WTC11 (cell line): ENCODE measurements at regions of chr22 and their contacts with region 1.

Region 1: DNA sequence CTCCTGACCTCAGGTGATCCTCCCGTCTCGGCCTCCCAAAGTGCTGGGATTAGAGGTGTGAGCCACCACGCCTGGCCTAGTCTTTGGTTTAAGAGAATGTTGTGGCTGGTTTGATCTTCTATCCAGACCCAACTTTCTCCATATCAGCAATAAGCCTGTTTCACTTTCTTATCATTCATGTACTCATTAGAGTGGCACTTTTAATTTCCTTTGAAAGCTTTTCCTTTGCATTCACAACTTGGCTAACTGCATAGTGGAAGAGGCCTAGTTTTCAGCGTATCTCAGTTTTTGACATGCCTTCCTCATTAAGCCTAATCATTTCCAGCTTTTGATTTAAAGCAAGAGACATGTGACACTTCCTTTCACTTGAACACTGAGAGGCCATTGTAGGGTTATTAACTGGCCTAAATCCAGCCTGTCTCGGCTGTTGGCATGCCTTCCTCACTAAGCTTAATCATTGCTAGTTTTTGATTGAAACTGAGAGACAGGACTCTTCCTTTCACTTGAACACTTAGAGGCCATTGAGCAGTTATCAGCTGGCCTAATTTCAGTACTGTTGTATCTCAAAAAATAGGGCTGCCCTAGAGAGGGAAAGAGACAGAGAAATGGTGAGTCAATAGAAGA is 13.1 kb upstream of the RPL3 start:
- DNase-seq: no peak
- ATAC-seq: no peak
- H3K4me3 Mint-ChIP-seq: no peak overlapping the region
- H3K27ac Mint-ChIP-seq: no peak overlapping the region
- H3K4me1 Mint-ChIP-seq: no peaks in the 10 kb centered on the region
- H3K27me3 Mint-ChIP-seq: no peaks in the 10 kb centered on the region; the same call in 1 of the 2 replicates
- CTCF ChIP-seq: no peak

Region 2: GRCh38 chr22:39290724-39291161 is 41.8 kb before region 1 on chr22:
- CTCF ChIA-PET with region 1: no interaction called
- POLR2A ChIA-PET with region 1: no interaction called
- DNase-seq: no peak
- ATAC-seq: 0 out of 2 replicates have a peak, but pooled peaks have one; percentile 15
- H3K4me3 Mint-ChIP-seq: no peak overlapping the region
- H3K27ac Mint-ChIP-seq: no peak overlapping the region
- H3K4me1 Mint-ChIP-seq: peaks cover 9% of the 10 kb centered on the region
- H3K27me3 Mint-ChIP-seq: no peaks in the 10 kb centered on the region
- CTCF ChIP-seq: no peak

Region 3: GRCh38 chr22:39319270-39320022 is 13.1 kb before region 1 on chr22 and contains the start of gene RPL3:
- CTCF ChIA-PET with region 1: interaction called, 37 read pairs
- POLR2A ChIA-PET with region 1: interaction called, 5 read pairs
- DNase-seq: peak; percentile 93
- ATAC-seq: peak; percentile 64
- H3K4me3 Mint-ChIP-seq: peak within 1 kb of the TSS; percentile 99
- H3K27ac Mint-ChIP-seq: peak within 1 kb of the TSS; percentile 100
- H3K4me1 Mint-ChIP-seq: peaks cover 44% of the 10 kb centered on the region
- H3K27me3 Mint-ChIP-seq: peaks cover 4% of the 10 kb centered on the region; the same call in 1 of the 2 replicates
- CTCF ChIP-seq: no peak
- total RNA-seq, gene RPL3: 3,009 to 3,279 TPM (median 3,249 TPM) in 3 replicates

Region 4: GRCh38 chr22:39349506-39349966 is 17.0 kb after region 1 on chr22:
- CTCF ChIA-PET with region 1: interaction called, 64 read pairs
- POLR2A ChIA-PET with region 1: no interaction called
- DNase-seq: peak; percentile 56
- ATAC-seq: peak; percentile 46
- H3K4me3 Mint-ChIP-seq: peak overlapping the region; percentile 83
- H3K27ac Mint-ChIP-seq: no peak overlapping the region
- H3K4me1 Mint-ChIP-seq: peaks cover 27% of the 10 kb centered on the region
- H3K27me3 Mint-ChIP-seq: peaks cover 7% of the 10 kb centered on the region
- CTCF ChIP-seq: no peak

Region 5: DNA sequence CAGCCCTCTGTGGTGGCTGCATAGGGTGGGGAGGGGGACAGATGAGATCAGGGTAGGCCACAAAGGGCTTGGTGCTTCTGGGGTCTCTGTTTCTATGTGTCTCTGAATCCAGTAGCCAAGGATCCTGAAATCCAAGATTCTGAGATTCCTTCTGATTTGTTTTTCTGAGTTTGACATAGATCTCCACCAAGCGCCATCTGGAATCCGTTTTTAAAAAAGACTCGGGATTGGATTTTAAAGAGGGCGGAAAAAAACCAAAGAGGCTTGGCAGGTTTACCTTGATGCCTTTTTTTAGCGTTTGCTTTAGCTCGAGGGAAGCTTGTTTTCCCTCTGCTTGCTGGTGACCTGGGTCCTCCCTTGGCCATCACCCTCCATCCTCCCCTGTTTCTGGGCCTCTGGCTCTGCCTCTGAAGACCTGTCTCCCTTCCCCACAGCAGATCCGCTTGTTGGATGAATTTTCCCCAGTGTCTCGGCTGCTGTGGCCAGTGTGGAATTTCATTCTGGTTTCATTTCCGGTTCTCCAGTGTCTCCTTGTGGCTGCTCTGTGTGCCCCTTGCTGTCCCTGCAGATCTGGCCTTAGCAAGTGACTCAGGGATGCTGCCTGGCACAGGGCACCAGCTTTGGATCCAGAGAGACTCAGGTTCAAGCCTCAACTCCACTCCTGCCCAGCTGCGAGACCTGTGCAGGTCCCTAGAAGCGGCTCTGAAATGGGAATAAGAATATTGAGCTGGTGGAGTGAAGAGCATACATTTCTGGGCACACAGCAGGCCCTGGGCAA is 32.4 kb after region 1 on chr22:
- CTCF ChIA-PET with region 1: interaction called, 12 read pairs
- POLR2A ChIA-PET with region 1: no interaction called
- DNase-seq: no peak
- ATAC-seq: no peak
- H3K4me3 Mint-ChIP-seq: no peak overlapping the region
- H3K27ac Mint-ChIP-seq: no peak overlapping the region
- H3K4me1 Mint-ChIP-seq: peaks cover 53% of the 10 kb centered on the region
- H3K27me3 Mint-ChIP-seq: no peaks in the 10 kb centered on the region
- CTCF ChIP-seq: no peak

Region 6: GRCh38 chr22:39514373-39514973 is 181.9 kb after region 1 on chr22:
- CTCF ChIA-PET with region 1: interaction called, 10 read pairs
- POLR2A ChIA-PET with region 1: no interaction called
- DNase-seq: peak; percentile 73
- ATAC-seq: no peak; the same call in 1 of the 2 replicates
- H3K4me3 Mint-ChIP-seq: no peak overlapping the region
- H3K27ac Mint-ChIP-seq: no peak overlapping the region
- H3K4me1 Mint-ChIP-seq: peaks cover 8% of the 10 kb centered on the region
- H3K27me3 Mint-ChIP-seq: peaks cover 83% of the 10 kb centered on the region
- CTCF ChIP-seq: peak; percentile 66